Activated T-helper 2 cell treated with anti-CD3 and anti-CD28 coated beads, Interferon-gamma antibody, Interleukin-2, Interleukin-4, amounts not matched to agents 10 μg/mL and 5 μg/mL and 100 μg/mL, durations not matched to agents 14 hours and 24 hours and 36 hours (primary cell): ENCODE measurements at regions of chr2 and their contacts with region 1.

Region 1: GRCh38 chr2:169928463-169928864 is 101.2 kb downstream of the UBR3 start:
- DNase-seq: no peak
- H3K4me3 Mint-ChIP-seq: no peak overlapping the region
- H3K27ac Mint-ChIP-seq: no peak overlapping the region
- H3K4me1 Mint-ChIP-seq: no peaks in the 10 kb centered on the region
- H3K27me3 Mint-ChIP-seq: no peaks in the 10 kb centered on the region

Region 2: GRCh38 chr2:169452080-169452479 is 476.4 kb before region 1 on chr2:
- intact Hi-C with region 1: loop called (anchors 5 kb)
- DNase-seq: no peak
- H3K4me3 Mint-ChIP-seq: no peak overlapping the region
- H3K27ac Mint-ChIP-seq: no peak overlapping the region
- H3K4me1 Mint-ChIP-seq: no peaks in the 10 kb centered on the region
- H3K27me3 Mint-ChIP-seq: peaks cover 5% of the 10 kb centered on the region

Region 3: GRCh38 chr2:169528271-169528701 is 400.2 kb before region 1 on chr2:
- intact Hi-C with region 1: loop called (anchors 2 kb)
- DNase-seq: peak; percentile 60
- H3K4me3 Mint-ChIP-seq: no peak overlapping the region
- H3K27ac Mint-ChIP-seq: no peak overlapping the region
- H3K4me1 Mint-ChIP-seq: no peaks in the 10 kb centered on the region
- H3K27me3 Mint-ChIP-seq: no peaks in the 10 kb centered on the region